ENCODE measurements at regions of chr7 and their contacts with region 1.

Region 1: GRCh38 chr7:31478721-31479120 is 35.2 kb upstream of the ITPRID1 start:
- DNase-seq: no peak
- ATAC-seq: no peak
- H3K4me3 ChIP-seq: no peak overlapping the region
- H3K27ac ChIP-seq: no peak overlapping the region
- H3K4me1 ChIP-seq: no peaks in the 10 kb centered on the region
- H3K27me3 ChIP-seq: peaks cover 0 to 26% (median 11%) of the 10 kb centered on the region in 7 donors
- CTCF ChIP-seq: no peak

Region 2: GRCh38 chr7:31192986-31193385 is 285.7 kb before region 1 on chr7:
- intact Hi-C with region 1: loop called in 1 of 10 experiments (anchors 10 kb)
- DNase-seq: peak; percentile 38 to 54
- ATAC-seq: peak; percentile 44 to 93 (median 72)
- H3K4me3 ChIP-seq: peak overlapping the region in 1 of 10 donors; percentile 10
- H3K27ac ChIP-seq: no peak overlapping the region
- H3K4me1 ChIP-seq: peaks cover 0 to 6% (median 0%) of the 10 kb centered on the region in 9 donors
- H3K27me3 ChIP-seq: peaks cover 0 to 45% (median 21%) of the 10 kb centered on the region in 7 donors
- CTCF ChIP-seq: peak; percentile 28 to 82 (median 65)

Measured in heart right ventricle (tissue), 16 donors.